ENCODE measurements at regions of chr18 and their contacts with region 1.

Region 1: GRCh38 chr18:68072744-68073143 is 556.2 kb upstream of the DSEL start:
- DNase-seq: no peak
- ATAC-seq: no peak
- H3K4me3 ChIP-seq: no peak overlapping the region
- H3K27ac ChIP-seq: no peak overlapping the region
- H3K4me1 ChIP-seq: no peaks in the 10 kb centered on the region
- H3K27me3 ChIP-seq: no peaks in the 10 kb centered on the region
- CTCF ChIP-seq: no peak
- POLR2A ChIP-seq: no peak
- RAD21 ChIP-seq: no peak

Region 2: GRCh38 chr18:68086481-68086880 is 13.7 kb after region 1 on chr18:
- CTCF ChIA-PET with region 1: no interaction called
- POLR2A ChIA-PET with region 1: no interaction called
- RAD21 ChIA-PET with region 1: no interaction called
- intact Hi-C with region 1: loop called (anchors 2 kb)
- DNase-seq: no peak
- ATAC-seq: no peak
- H3K4me3 ChIP-seq: no peak overlapping the region
- H3K27ac ChIP-seq: no peak overlapping the region
- H3K4me1 ChIP-seq: no peaks in the 10 kb centered on the region
- H3K27me3 ChIP-seq: no peaks in the 10 kb centered on the region
- CTCF ChIP-seq: no peak
- POLR2A ChIP-seq: no peak
- RAD21 ChIP-seq: no peak

Measured in HCT116 (cell line).